Heart right ventricle (tissue), 16 donors: ENCODE measurements at regions of chr10 and their contacts with region 1.

Region 1: DNA sequence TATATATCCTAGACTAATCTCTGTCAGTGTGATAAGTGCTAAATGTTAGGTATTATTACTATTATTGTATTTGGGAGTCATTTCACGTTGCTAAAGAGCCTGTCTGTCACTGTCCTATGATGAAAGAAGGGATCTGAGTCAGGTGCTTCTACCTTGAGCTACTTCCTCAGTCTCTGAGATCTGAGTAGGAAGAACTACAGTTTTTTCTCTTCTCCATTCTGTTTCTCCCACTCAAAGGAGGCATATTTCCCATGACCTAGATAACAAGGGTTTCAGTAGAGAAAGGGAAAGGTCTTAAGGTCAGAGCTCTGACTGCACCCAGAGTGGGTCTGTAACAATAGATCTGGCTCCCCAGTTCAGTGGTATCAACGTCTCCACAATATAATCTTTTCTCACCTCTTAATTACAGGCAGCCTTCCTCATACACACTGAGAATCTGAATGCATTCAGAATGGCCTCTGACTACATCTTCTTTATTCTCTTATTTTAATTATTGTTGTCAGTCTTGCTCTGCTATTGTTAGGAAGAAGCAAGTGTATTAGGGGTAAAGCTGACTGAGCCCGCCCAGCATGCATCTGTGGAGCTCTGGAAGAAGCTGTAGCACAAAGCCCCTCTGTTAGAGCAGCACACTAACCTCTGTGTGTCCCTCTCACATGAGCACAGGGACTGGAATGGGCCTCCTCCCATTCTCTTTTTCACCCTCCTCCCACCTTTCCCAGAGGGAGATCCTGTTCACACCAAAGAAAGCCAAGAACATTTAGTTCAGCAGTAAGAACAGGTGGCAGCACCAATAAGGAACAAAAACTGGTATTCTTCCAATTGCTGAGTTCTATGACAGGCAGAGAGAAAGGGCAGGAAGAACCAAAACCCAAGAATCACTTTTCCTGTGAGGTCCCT is 38.1 kb downstream of the USP54 start:
- DNase-seq: no peak
- ATAC-seq: peak in 7 of 8 donors; percentile 70 to 95 (median 82)
- H3K4me3 ChIP-seq: no peak overlapping the region
- H3K27ac ChIP-seq: peak overlapping the region in 6 of 10 donors; percentile 4 to 58 (median 28)
- H3K4me1 ChIP-seq: peaks cover 0 to 17% (median 4%) of the 10 kb centered on the region in 9 donors
- H3K27me3 ChIP-seq: no peaks in the 10 kb centered on the region
- CTCF ChIP-seq: no peak

Region 2: GRCh38 chr10:73601486-73601921 is 48.4 kb after region 1 on chr10:
- intact Hi-C with region 1: loop called in 1 of 10 experiments (anchors 5 kb)
- DNase-seq: no peak
- ATAC-seq: no peak
- H3K4me3 ChIP-seq: no peak overlapping the region
- H3K27ac ChIP-seq: no peak overlapping the region
- H3K4me1 ChIP-seq: no peaks in the 10 kb centered on the region
- H3K27me3 ChIP-seq: no peaks in the 10 kb centered on the region
- CTCF ChIP-seq: no peak

Region 3: GRCh38 chr10:73614720-73615119 is 61.7 kb after region 1 on chr10:
- intact Hi-C with region 1: loop called in 1 of 10 experiments (anchors 10 kb)
- DNase-seq: no peak
- ATAC-seq: no peak
- H3K4me3 ChIP-seq: no peak overlapping the region
- H3K27ac ChIP-seq: no peak overlapping the region
- H3K4me1 ChIP-seq: no peaks in the 10 kb centered on the region
- H3K27me3 ChIP-seq: no peaks in the 10 kb centered on the region
- CTCF ChIP-seq: no peak